ENCODE measurements at regions of chr10 and their contacts with region 1.

Region 1: DNA sequence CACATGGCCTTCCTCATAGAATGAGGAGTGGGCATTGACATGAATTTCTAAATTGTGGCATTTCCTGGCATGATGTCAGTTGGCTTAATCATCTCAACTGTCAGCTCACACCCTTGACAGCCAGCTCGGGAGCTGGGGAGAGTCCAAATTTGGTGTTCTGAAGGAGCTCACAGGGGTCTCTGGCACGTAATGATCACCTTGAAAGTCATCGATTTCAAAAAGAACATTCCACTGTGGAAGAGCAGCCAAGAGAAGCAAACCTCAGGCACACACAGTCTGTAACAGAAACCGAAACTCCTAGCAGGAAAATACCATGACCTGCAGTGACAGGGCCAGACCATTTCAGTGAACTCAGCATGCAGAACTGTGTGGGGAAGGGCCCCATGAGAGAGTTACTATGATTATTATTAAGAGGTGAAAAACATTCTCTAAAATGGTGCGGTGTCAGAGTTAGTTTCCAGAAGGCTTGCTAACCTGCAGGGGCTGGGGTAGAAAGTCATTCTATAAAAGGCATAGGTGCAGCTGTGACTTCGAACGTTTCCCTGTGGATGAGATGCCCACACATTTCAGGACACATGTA is 26.4 kb upstream of the KLF6 start:
- DNase-seq: peak; percentile 61
- H3K4me3 Mint-ChIP-seq: peak overlapping the region; percentile 60
- H3K27ac Mint-ChIP-seq: peak overlapping the region; percentile 99
- H3K4me1 Mint-ChIP-seq: peaks cover 85% of the 10 kb centered on the region
- H3K27me3 Mint-ChIP-seq: no peaks in the 10 kb centered on the region

Region 2: DNA sequence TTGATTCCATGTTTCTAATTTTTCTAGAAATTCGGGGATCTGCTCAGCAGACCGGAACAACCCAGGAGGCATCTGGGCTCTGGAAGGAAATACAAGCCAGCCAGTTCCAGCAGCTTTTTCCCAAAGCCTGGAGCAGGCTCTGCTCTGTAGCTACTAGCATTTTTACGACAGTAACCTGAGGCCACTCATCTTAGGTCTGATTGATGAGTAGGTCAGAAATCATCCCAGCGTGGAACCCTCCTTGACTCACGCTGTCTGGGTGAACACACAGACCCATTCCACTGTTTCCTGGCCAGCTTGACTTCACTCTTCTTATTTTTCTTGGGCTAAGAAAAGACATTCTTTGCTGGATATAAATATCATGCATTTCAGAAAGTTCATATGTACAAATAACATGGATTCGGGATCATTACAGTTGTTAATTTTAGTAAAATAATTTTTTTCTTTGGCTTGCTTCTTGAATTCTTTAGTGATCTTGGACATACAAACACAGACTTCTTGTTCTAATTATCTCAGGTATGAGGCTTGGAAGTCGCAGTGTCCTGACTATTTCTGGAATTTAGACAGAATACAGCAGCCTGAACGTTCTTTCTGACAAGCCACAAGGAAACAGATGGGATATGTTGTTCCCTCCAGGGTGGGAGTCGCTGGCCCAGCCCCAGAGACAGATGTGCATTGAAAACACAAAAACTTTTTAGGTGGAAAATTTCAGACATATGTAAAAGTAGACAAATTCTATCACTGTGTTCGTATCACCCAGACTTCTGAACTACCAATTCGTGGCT is 584.2 kb before region 1 on chr10:
- intact Hi-C with region 1: loop called (anchors 2 kb)
- DNase-seq: no peak
- H3K4me3 Mint-ChIP-seq: no peak overlapping the region
- H3K27ac Mint-ChIP-seq: no peak overlapping the region
- H3K4me1 Mint-ChIP-seq: peaks cover 18% of the 10 kb centered on the region
- H3K27me3 Mint-ChIP-seq: peaks cover 18% of the 10 kb centered on the region

Region 3: GRCh38 chr10:3435671-3436070 is 375.7 kb before region 1 on chr10:
- intact Hi-C with region 1: no loop called
- DNase-seq: no peak
- H3K4me3 Mint-ChIP-seq: no peak overlapping the region
- H3K27ac Mint-ChIP-seq: no peak overlapping the region
- H3K4me1 Mint-ChIP-seq: peaks cover 5% of the 10 kb centered on the region
- H3K27me3 Mint-ChIP-seq: peaks cover 15% of the 10 kb centered on the region

Region 4: GRCh38 chr10:3797750-3798149 is 13.6 kb before region 1 on chr10:
- intact Hi-C with region 1: loop called (anchors 1 kb)
- DNase-seq: no peak
- H3K4me3 Mint-ChIP-seq: peak overlapping the region; percentile 61
- H3K27ac Mint-ChIP-seq: peak overlapping the region; percentile 88
- H3K4me1 Mint-ChIP-seq: peaks cover 43% of the 10 kb centered on the region
- H3K27me3 Mint-ChIP-seq: no peaks in the 10 kb centered on the region

Region 5: GRCh38 chr10:3852147-3852904 is 40.9 kb after region 1 on chr10:
- intact Hi-C with region 1: loop called (anchors 1 kb)
- DNase-seq: peak; percentile 58
- H3K4me3 Mint-ChIP-seq: peak overlapping the region; percentile 52
- H3K27ac Mint-ChIP-seq: peak overlapping the region; percentile 92
- H3K4me1 Mint-ChIP-seq: peaks cover 37% of the 10 kb centered on the region
- H3K27me3 Mint-ChIP-seq: no peaks in the 10 kb centered on the region

Region 6: GRCh38 chr10:3887885-3888476 is 76.6 kb after region 1 on chr10:
- intact Hi-C with region 1: loop called (anchors 1 kb)
- DNase-seq: peak; percentile 48
- H3K4me3 Mint-ChIP-seq: peak overlapping the region; percentile 20
- H3K27ac Mint-ChIP-seq: peak overlapping the region; percentile 76
- H3K4me1 Mint-ChIP-seq: peaks cover 38% of the 10 kb centered on the region
- H3K27me3 Mint-ChIP-seq: no peaks in the 10 kb centered on the region

Region 7: GRCh38 chr10:4024516-4025409 is 213.4 kb after region 1 on chr10:
- intact Hi-C with region 1: no loop called
- DNase-seq: no peak
- H3K4me3 Mint-ChIP-seq: no peak overlapping the region
- H3K27ac Mint-ChIP-seq: no peak overlapping the region
- H3K4me1 Mint-ChIP-seq: peaks cover 14% of the 10 kb centered on the region
- H3K27me3 Mint-ChIP-seq: no peaks in the 10 kb centered on the region

Region 8: DNA sequence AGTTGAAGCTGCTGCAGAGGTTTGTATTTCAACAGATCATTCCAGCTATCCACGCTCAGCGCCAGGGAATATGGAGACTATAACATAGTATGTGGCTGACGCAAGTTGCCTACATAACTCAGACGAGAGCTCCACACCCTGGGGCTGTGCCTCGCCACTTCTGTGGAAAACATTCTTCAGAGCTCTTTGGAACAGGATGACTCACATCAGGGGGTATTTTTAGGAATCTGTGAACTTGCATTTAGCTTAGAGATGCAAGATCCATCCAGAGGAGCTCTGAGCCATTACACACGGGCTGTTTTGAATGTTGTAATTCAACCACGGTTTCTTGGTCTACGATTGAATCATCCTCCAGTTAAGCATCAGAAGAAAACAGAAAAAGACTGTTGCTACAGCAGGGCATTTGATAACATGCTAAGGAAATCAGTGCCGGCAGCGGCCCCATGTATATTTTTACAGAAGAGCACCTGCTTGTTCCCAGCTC is 533.2 kb after region 1 on chr10:
- intact Hi-C with region 1: loop called (anchors 2 kb)
- DNase-seq: no peak
- H3K4me3 Mint-ChIP-seq: no peak overlapping the region
- H3K27ac Mint-ChIP-seq: peak overlapping the region; percentile 6
- H3K4me1 Mint-ChIP-seq: peaks cover 15% of the 10 kb centered on the region
- H3K27me3 Mint-ChIP-seq: peaks cover 4% of the 10 kb centered on the region

Measured in activated T-helper 1 cell treated with anti-CD3 and anti-CD28 coated beads, Interleukin-12 subunit alpha, Interleukin-12 subunit beta, Interleukin-2, Interleukin-4 antibody, amounts not matched to agents 30 ng/mL and 10 ng/mL and 1 ng/mL, durations not matched to agents 14 hours and 24 hours and 36 hours (primary cell).